ENCODE measurements at regions of chr15 and their contacts with region 1.

Region 1: GRCh38 chr15:95259513-95259912 is 1028.2 kb downstream of the MCTP2 start:
- DNase-seq: peak; percentile 83

Region 2: DNA sequence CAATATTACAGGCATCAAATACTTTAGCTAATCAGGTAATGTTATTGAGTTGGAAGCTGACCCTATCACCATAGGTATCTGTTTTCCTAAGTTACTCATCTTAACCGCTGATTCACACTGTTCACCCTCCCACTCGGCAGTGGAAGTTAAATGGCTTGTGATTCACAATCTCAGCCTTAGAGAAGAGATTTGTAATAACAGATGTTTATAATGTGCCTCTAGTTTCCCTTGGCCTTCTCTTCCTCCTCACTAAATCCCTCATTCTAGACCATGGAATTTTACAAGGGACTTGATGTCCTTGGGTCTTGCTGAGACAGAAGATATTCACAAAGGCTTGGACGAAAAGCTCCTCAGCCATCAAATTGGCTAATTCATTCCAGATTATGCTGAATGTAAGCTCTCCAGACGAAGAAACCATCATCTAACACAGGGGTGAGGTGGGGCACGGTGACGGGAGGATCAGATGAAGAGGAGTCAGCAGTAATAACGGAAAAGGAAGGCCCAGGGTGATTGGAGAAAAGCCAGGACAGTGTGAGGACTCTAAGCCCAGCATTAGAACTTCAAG is 96.5 kb before region 1 on chr15:
- intact Hi-C with region 1: loop called in 1 of 2 experiments (anchors 10 kb)
- DNase-seq: no peak

Region 3: DNA sequence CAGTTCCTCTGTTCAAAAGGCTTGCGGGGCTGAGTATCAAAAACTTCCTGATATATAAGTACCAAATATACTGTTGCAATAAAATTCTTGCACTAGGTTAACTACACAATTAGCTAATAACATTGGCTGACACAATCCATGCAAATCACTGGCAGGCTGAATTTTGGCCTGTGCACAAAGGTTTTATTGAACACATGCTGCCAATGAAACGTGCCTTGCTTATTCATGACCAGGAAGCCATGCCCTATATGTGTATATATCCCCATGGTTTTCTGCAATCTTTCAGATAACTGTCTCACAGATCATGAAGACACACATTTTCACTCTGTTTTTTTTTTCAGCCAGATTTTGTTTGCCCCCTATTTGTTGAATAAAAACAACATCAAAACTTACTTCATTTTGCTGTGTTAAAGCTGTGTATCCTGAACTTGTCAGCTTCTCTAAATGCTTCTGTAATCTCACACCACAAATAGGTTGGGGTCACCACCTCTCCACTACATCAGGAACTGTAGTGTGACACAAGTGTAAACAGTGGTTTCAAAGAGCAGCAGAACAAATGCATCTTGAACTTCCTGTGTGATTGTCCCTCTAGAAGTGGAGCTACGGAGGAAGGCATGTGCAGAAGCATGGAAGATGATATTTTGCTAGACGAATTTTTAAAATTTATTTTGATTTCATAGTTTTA is 150.3 kb after region 1 on chr15:
- intact Hi-C with region 1: loop called in 1 of 2 experiments (anchors 10 kb)
- DNase-seq: no peak

Measured in posterior vena cava (tissue), 2 donors.